ENCODE measurements at regions of chr14 and their contacts with region 1.

Region 1: DNA sequence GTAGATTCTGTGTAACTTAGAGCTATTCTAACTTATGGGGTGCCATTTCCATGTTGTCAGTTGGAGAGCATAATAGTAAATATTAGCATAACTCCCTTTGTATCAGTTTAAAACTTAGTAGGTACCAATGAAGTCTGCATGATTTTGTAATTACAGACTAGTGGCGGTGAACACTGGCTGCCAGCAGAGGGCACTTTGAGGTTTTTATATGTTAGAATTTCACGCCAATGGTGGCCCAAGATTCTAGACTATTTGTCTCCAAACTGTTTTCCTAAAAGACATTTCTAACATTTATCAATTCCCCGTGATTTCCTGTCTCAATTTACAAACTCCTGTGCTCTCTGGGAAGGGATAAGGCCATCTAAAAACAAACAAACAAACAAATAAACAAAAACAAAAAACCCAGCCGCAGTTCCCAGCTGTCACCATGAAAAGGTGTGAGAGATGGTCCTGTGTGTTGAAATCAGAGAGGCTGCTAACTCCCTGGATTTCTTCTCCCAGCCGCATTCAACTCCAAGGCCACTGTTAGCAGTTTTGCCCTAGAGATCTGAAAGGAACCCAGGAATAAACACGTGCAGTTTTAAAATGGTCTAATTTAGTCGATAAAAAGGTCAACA is 57.6 kb downstream of the BRMS1L start:
- DNase-seq: peak in 3 of 9 experiments; percentile 10 to 39 (median 26)
- ATAC-seq: no peak
- H3K4me3 ChIP-seq: no peak overlapping the region
- H3K4me3 Mint-ChIP-seq: no peak overlapping the region
- H3K27ac ChIP-seq: no peak overlapping the region
- H3K27ac Mint-ChIP-seq: no peak overlapping the region
- H3K4me1 ChIP-seq: no peaks in the 10 kb centered on the region
- H3K4me1 Mint-ChIP-seq: peaks cover 2% of the 10 kb centered on the region
- H3K27me3 ChIP-seq: no peaks in the 10 kb centered on the region
- H3K27me3 Mint-ChIP-seq: peaks cover 3% of the 10 kb centered on the region
- CTCF ChIP-seq: peak; percentile 68

Region 2: DNA sequence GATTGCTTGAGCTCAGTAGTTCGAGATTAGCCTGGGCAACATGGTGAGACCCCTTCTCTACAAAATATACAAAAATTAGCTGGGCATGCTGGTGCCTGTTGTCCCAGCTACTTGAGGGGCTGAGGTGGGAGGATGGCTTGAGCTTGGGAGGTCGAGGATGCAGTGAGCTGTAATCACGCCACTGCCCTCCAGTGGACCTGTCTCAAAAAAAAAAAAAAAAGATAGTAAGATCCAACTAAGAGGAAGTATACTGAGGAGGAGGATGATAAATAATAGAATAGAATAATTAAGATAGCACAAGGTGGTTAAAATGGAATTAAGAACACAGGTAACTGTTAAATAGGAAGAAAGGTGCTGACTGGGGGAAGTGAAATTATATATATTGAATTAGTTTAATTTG is 971.6 kb before region 1 on chr14:
- CTCF ChIA-PET with region 1: no interaction called
- POLR2A ChIA-PET with region 1: no interaction called
- intact Hi-C with region 1: no loop called
- DNase-seq: peak in 2 of 9 experiments; percentile 13 to 38
- ATAC-seq: no peak
- H3K4me3 ChIP-seq: no peak overlapping the region
- H3K4me3 Mint-ChIP-seq: no peak overlapping the region
- H3K27ac ChIP-seq: no peak overlapping the region
- H3K27ac Mint-ChIP-seq: no peak overlapping the region
- H3K4me1 ChIP-seq: no peaks in the 10 kb centered on the region
- H3K4me1 Mint-ChIP-seq: no peaks in the 10 kb centered on the region
- H3K27me3 ChIP-seq: no peaks in the 10 kb centered on the region
- H3K27me3 Mint-ChIP-seq: no peaks in the 10 kb centered on the region
- CTCF ChIP-seq: no peak

Region 3: DNA sequence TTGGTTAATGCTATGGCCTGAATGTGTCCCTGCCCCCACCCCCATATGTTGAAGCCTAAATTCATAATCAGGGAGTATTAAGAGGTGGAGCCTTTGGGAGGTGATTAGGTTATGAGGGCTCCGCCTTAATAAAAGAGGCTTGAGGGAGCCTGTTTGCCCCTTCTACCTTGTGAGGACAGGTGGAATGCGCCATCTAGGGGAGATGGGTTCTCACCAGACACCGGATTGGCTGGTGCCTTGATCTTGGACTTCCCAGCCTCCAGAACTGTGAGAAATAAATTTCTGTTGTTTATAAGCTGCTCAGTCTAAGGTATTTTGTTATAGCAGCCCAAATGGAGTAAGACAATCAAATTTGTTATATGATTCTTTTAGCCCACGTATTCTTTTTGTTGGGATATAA is 144.4 kb after region 1 on chr14:
- CTCF ChIA-PET with region 1: no interaction called
- POLR2A ChIA-PET with region 1: no interaction called
- intact Hi-C with region 1: loop called in 1 of 2 experiments (anchors 5 kb)
- DNase-seq: peak in 1 of 9 experiments; percentile 8
- ATAC-seq: no peak
- H3K4me3 ChIP-seq: no peak overlapping the region
- H3K4me3 Mint-ChIP-seq: no peak overlapping the region
- H3K27ac ChIP-seq: no peak overlapping the region
- H3K27ac Mint-ChIP-seq: no peak overlapping the region
- H3K4me1 ChIP-seq: no peaks in the 10 kb centered on the region
- H3K4me1 Mint-ChIP-seq: no peaks in the 10 kb centered on the region
- H3K27me3 ChIP-seq: no peaks in the 10 kb centered on the region
- H3K27me3 Mint-ChIP-seq: peaks cover 8% of the 10 kb centered on the region
- CTCF ChIP-seq: no peak

Region 4: DNA sequence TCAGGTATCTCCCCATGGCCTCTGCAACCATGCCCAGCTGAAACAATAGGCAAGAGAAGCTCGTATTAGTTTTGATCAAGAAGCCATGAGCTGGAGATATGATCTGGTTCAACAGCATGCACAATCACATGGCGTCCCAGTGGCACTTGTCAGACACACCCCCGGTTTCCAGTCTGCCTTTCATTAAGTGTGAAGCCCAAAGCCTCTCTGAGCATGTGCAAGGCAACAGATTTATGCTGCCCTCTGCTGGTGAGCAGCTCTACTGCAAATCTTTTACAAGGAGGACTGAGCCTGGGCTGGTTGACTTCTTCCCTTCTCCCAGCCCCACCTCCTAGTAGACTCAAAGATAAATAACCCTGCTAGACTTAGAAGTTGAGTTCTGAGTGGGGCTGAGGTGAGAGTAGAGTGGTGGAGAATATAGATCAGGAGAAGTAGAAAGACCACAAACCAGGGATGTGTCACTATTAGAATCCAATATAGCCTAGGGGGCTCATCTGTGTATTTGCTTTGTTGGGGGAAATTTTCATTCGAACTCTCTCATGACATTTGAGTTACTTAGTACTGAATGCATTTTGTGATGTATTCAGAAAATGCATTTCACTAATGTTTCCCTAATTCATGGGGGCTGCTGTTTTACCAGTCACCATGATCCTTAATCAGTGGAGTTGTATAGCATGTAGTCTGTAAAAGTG is 490.3 kb after region 1 on chr14:
- CTCF ChIA-PET with region 1: interaction called, 12 read pairs
- POLR2A ChIA-PET with region 1: no interaction called
- intact Hi-C with region 1: loop called (anchors 1 kb)
- DNase-seq: peak; percentile 22 to 75 (median 65)
- ATAC-seq: peak; percentile 80
- H3K4me3 ChIP-seq: no peak overlapping the region
- H3K4me3 Mint-ChIP-seq: no peak overlapping the region
- H3K27ac ChIP-seq: no peak overlapping the region
- H3K27ac Mint-ChIP-seq: no peak overlapping the region
- H3K4me1 ChIP-seq: no peaks in the 10 kb centered on the region
- H3K4me1 Mint-ChIP-seq: no peaks in the 10 kb centered on the region
- H3K27me3 ChIP-seq: no peaks in the 10 kb centered on the region
- H3K27me3 Mint-ChIP-seq: peaks cover 9% of the 10 kb centered on the region
- CTCF ChIP-seq: peak; percentile 75

Region 5: DNA sequence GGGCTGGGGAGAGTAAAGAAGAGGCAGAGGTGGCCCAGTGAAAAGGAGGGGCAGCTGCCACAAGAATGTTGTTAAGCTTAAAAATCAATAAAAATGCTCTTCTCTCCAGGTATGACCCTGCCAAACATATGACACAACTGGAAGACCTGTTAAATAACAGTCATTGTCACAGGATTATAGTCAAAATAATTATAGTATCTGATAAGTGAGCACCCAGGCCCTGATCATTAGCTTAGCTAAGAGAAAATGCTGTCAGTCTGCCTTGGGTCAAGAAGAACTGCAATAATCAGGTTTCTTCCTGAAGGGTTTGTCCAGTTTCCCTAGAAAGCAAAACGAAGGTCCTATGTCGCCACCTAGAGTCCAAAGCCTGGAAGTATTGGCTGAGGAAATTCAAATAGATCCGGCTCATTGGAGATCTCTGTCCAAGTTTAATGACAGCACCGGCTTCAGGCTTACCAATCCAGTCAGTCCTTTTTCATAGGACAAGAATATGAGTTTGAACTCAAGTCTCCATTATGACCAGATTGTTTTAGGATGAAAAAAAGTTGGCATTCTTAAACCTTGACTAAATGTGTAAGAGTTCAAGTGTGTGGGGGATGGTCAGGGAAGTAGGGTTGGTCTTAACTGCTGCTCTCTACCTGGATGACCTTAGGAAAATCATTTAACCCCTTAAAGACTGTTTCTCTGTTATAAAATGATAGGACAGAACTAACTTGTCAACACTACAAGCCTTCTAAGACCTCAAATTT is 721.1 kb after region 1 on chr14:
- CTCF ChIA-PET with region 1: no interaction called
- POLR2A ChIA-PET with region 1: no interaction called
- intact Hi-C with region 1: loop called (anchors 5 kb)
- DNase-seq: peak in 4 of 9 experiments; percentile 7 to 45 (median 26)
- ATAC-seq: no peak
- H3K4me3 ChIP-seq: no peak overlapping the region
- H3K4me3 Mint-ChIP-seq: no peak overlapping the region
- H3K27ac ChIP-seq: no peak overlapping the region
- H3K27ac Mint-ChIP-seq: no peak overlapping the region
- H3K4me1 ChIP-seq: no peaks in the 10 kb centered on the region
- H3K4me1 Mint-ChIP-seq: no peaks in the 10 kb centered on the region
- H3K27me3 ChIP-seq: no peaks in the 10 kb centered on the region
- H3K27me3 Mint-ChIP-seq: peaks cover 12% of the 10 kb centered on the region
- CTCF ChIP-seq: peak; percentile 61